MCF 10A (cell line): ENCODE measurements at regions of chr22 and their contacts with region 1.

Region 1: DNA sequence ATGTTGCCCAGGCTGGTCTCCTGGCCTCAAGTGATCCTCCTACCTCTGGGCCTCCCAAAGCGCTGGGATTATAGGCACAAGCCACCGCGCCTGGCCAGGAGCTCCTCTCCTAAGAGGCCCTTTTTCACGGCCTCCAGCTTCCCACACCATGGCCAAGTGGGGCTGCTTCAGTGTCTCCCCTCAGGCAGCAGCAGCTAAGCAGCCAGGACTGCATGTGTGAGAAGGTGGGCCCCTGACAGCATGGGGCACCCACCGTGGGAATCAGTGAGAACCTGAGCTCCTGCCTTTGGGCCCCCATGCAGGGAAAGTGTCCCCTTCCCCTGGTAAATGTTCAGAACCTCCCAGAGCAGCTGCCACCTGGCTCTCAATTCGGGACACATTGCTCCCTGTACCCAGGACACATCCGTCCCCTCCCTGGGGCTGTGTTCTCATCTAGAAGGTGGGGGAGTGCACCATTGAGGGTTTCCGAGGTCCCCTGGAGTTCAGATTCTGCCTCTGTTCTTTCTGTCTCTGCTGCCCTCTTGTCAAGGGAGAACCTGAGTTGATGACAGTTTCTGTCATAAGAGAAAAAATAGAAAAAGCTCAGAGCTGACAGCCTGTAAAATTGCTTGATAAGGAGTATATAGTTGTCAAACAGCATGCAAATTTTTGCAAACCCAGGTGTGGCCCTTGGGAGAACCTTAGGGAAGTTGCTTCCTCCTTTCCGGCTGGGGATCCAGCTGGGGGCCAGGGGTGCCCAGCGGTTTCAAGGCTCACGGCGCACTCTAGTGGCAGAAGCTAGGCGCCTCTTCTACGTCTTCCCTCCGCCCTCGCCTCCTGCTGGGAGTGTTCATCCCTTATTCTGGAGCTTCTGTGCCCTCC is 29.7 kb downstream of the FAM83F start:
- DNase-seq: peak; percentile 73
- H3K4me3 Mint-ChIP-seq: no peak overlapping the region
- H3K27ac Mint-ChIP-seq: no peak overlapping the region
- H3K4me1 Mint-ChIP-seq: peaks cover 7% of the 10 kb centered on the region
- H3K27me3 Mint-ChIP-seq: no peaks in the 10 kb centered on the region
- CTCF ChIP-seq: peak; percentile 93

Region 2: GRCh38 chr22:39622881-39623367 is 401.5 kb before region 1 on chr22:
- CTCF ChIA-PET with region 1: interaction called, 6 read pairs
- POLR2A ChIA-PET with region 1: no interaction called
- intact Hi-C with region 1: loop called (anchors 1 kb)
- DNase-seq: peak; percentile 54
- H3K4me3 Mint-ChIP-seq: no peak overlapping the region
- H3K27ac Mint-ChIP-seq: no peak overlapping the region
- H3K4me1 Mint-ChIP-seq: no peaks in the 10 kb centered on the region
- H3K27me3 Mint-ChIP-seq: peaks cover 28% of the 10 kb centered on the region
- CTCF ChIP-seq: peak; percentile 56

Region 3: DNA sequence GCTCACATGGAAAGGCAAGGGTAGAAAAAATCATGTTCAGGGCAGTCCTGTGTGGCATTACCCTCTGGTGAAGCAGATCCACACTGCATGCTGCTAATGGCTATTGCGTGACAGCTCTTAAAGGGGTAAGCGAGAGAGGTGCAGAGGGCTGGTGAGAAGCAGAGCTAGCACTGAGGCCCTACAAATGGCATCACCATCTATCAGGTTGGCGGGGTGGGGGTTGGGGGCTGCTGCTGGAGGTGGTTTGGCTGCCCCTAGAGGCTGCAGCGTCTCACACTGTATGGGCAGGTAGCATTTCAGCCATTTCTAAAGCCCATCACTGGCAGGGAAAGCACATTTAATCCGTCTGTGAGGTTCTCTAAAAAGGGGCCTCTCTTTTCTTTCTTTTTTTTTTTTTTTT is 81.1 kb before region 1 on chr22:
- CTCF ChIA-PET with region 1: interaction called, 10 read pairs
- POLR2A ChIA-PET with region 1: no interaction called
- intact Hi-C with region 1: no loop called
- DNase-seq: no peak
- H3K4me3 Mint-ChIP-seq: no peak overlapping the region
- H3K27ac Mint-ChIP-seq: no peak overlapping the region
- H3K4me1 Mint-ChIP-seq: no peaks in the 10 kb centered on the region
- H3K27me3 Mint-ChIP-seq: no peaks in the 10 kb centered on the region
- CTCF ChIP-seq: no peak

Region 4: GRCh38 chr22:39997939-39998338 is 26.5 kb before region 1 on chr22:
- CTCF ChIA-PET with region 1: interaction called, 103 read pairs
- POLR2A ChIA-PET with region 1: interaction called, 12 read pairs
- intact Hi-C with region 1: no loop called
- DNase-seq: peak; percentile 95
- H3K4me3 Mint-ChIP-seq: peak overlapping the region; percentile 73
- H3K27ac Mint-ChIP-seq: peak overlapping the region; percentile 61
- H3K4me1 Mint-ChIP-seq: peaks cover 62% of the 10 kb centered on the region
- H3K27me3 Mint-ChIP-seq: peaks cover 8% of the 10 kb centered on the region
- CTCF ChIP-seq: no peak

Region 5: DNA sequence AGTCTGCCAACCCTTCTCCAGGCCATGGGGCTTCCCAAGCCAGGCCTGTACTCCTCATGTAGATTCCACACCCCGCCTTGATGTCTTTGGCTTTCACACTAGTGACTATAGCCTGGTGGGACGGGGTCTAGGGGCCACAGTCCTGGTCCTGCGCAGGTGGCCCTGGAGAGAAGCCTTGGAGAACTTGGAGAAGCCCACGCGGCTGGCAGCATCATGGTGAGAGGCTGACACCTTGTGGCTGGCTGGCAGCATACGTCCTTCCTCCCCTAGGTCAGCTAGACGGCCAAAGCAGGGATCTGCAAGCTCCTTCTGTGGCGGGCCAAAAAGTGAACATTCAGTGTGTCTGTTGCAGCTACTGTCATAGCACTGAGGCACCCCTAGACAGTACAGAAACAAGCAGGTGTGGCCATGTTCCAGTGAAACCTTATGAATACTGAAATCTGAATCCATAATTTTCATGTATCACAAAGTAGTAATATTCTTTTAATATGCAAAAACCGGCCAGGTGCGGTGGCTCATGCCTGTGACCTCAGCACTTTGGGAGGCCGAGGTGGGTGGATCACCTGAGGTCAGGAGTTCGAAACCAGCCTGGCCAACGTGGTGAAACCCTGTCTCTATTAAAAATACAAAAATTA is 12.3 kb after region 1 on chr22:
- CTCF ChIA-PET with region 1: interaction called, 115 read pairs
- POLR2A ChIA-PET with region 1: interaction called, 10 read pairs
- intact Hi-C with region 1: no loop called
- DNase-seq: peak; percentile 77
- H3K4me3 Mint-ChIP-seq: no peak overlapping the region
- H3K27ac Mint-ChIP-seq: no peak overlapping the region
- H3K4me1 Mint-ChIP-seq: peaks cover 28% of the 10 kb centered on the region
- H3K27me3 Mint-ChIP-seq: no peaks in the 10 kb centered on the region
- CTCF ChIP-seq: peak; percentile 75

Region 6: DNA sequence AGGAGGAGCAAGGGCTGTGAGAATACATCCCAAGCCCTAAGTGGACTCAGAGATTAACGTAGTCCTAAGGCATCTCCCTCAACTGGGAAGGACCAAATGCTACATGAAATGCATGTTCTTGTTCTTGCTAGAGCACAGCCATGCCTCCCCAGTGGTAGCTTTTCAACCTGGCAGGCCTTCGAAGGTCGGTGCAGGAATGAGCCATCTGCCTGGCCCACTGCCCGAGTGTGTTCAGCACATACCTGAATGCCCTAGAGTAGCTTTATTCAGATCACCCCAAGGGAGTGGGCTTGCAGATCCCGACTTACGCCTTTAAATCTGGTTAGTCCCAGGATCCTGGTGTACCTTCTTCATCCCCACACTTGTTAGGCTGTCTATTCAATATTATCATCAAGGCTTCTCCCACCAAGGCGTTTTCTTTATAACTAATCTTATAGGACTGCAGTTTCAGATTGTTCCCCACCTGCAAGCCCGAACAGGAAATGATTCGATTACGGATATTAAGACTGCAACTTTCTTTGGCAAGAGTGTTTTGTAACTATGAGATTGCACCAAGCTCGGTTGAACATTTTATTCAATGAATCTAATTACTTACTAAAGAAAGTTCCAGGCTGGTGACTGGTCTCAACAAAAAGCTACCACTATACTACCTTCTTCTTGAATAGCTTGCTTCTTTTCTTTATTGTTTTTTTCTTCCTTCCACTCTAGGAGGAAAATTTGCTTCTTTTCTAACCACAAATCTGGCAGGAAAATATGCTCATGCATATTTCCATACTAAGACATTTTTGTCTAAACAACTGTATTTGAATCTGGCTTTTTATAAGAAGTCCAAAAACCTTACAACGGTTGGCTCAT is 461.6 kb after region 1 on chr22:
- CTCF ChIA-PET with region 1: no interaction called
- POLR2A ChIA-PET with region 1: no interaction called
- intact Hi-C with region 1: no loop called
- DNase-seq: peak; percentile 89
- H3K4me3 Mint-ChIP-seq: peak overlapping the region; percentile 57
- H3K27ac Mint-ChIP-seq: peak overlapping the region; percentile 94
- H3K4me1 Mint-ChIP-seq: peaks cover 44% of the 10 kb centered on the region
- H3K27me3 Mint-ChIP-seq: no peaks in the 10 kb centered on the region
- CTCF ChIP-seq: no peak